K562 (cell line): ENCODE measurements at regions of chr7 and their contacts with region 1.

Region 1: DNA sequence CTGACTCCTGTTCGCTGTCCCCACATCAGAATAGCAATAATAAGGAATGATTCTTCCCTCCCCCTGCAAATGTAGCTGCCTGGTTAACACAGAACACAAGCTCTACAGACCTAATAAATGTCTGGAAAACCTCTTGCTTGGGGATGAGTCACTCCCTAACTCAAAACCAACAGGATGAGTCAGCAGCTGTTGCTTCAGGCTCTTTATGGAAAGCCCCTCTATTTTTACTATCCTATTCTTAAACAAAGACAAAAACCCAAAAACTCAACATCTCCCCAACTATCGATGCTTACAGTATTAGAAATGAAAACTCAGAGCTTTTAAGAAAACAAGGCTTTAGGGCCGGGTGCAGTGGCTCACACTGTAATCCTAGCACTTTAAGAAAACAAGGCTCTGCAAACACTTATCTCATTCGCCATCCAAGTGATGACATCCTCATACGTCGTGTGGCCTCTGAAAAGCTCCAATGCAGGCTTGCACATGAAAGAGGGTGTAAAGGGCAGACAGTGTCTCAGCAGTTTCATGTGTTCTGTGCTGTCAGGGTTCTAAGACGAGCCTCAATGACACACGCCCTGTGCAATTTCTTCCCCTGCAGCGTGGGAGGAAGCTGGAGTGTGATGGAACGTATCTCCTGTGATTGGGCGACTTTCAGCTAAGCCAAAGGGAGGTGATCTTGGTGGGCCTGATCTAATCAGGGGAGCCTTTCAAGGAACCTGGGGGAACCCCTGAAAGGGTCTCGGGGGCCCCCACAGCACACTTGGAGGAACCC is 70.1 kb downstream of the AMZ1 start:
- DNase-seq: peak; percentile 70 to 94 (median 74)
- ATAC-seq: peak; percentile 93
- H3K4me3 ChIP-seq: peak overlapping the region; percentile 17; the same call in 1 of the 2 replicates
- H3K27ac ChIP-seq: peak overlapping the region; percentile 95
- H3K4me1 ChIP-seq: peaks cover 32 to 58% of the 10 kb centered on the region in 2 experiments
- H3K27me3 ChIP-seq: no peaks in the 10 kb centered on the region
- CTCF ChIP-seq: no peak
- EP300 ChIP-seq: peak; percentile 68
- POLR2A ChIP-seq: no peak
- RAD21 ChIP-seq: peak in 1 of 2 experiments; percentile 5; a peak in 2 of 4 replicates

Region 2: DNA sequence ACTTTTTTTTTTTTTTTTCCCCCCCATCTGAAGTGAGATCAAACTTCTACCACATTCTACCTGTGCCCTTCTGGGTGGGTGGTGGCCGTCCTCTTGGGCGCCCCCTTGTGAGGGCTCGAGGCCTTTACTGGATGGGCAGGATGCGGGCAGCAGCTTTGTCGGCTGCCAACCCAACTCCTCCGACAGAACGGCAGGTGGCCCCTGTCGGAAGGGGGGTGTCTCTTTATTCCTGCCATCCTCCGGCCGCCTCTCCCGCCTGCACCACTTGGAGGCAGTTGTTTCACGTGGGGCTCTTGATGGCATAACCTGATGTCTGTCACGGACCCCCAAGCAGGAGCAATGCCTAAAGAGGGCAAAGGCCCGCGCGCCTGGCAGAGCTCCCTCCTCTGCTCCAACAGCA is 39.1 kb before region 1 on chr7:
- CTCF ChIA-PET with region 1: no interaction called
- POLR2A ChIA-PET with region 1: interaction called, 4 read pairs
- in situ Hi-C with region 1: no loop called
- intact Hi-C with region 1: loop called (anchors 5 kb)
- DNase-seq: peak; percentile 30 to 69 (median 56)
- ATAC-seq: no peak
- H3K4me3 ChIP-seq: no peak overlapping the region
- H3K27ac ChIP-seq: no peak overlapping the region
- H3K4me1 ChIP-seq: peaks cover 36 to 59% of the 10 kb centered on the region in 2 experiments
- H3K27me3 ChIP-seq: no peaks in the 10 kb centered on the region
- CTCF ChIP-seq: peak; percentile 46 to 58 (median 50); a peak in 5 of 6 replicates
- EP300 ChIP-seq: no peak
- POLR2A ChIP-seq: no peak
- RAD21 ChIP-seq: peak in 1 of 2 experiments; percentile 15; a peak in 1 of 4 replicates

Region 3: DNA sequence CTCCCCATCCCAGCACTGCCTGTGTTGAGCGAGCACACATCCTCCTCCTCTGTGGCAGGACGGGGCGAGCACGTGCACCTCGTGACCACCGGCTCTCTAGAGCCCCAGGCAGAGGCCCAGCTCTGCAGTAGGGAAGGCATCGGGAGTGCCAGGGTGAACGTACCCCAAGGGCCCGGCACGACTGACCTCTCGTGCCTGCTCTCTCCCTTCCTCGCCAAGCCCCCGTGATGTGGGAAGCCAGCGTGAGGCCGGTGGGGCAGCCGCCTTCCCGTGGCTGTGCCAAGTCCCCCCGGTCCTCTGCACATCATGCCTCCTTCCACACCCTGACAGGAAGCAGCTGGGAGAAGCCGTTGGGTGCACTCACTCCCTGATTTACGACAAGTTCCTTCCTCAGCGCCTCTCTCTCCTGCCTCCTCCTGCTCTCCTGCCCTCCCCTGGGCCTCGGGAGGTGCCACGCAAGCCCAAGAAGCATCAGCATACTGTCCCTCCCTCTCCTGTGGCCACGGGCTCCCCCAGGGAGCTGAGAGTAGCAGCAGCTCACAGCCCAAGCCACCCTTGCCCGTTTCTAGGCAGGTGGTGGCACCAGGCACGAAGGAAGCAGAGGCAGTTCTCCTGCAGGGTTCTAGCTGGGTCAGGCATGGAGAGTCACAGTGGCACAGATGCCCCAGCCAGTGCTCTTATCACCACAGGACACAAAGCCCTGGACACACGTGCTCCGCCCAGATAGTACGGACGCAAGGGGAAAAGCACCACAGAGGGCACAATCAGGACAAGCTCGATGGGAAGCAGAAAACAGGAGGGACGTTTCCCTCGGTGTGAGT is 23.1 kb before region 1 on chr7:
- CTCF ChIA-PET with region 1: no interaction called
- POLR2A ChIA-PET with region 1: interaction called, 22 read pairs
- in situ Hi-C with region 1: no loop called
- intact Hi-C with region 1: loop called (anchors 2 kb)
- DNase-seq: peak; percentile 49 to 78 (median 74)
- ATAC-seq: peak; percentile 30
- H3K4me3 ChIP-seq: no peak overlapping the region
- H3K27ac ChIP-seq: peak overlapping the region; percentile 49; the same call in 2 of the 3 replicates
- H3K4me1 ChIP-seq: peaks cover 42 to 55% of the 10 kb centered on the region in 2 experiments
- H3K27me3 ChIP-seq: no peaks in the 10 kb centered on the region
- CTCF ChIP-seq: no peak
- EP300 ChIP-seq: peak; percentile 52; the same call in 1 of the 2 replicates
- POLR2A ChIP-seq: no peak
- RAD21 ChIP-seq: no peak

Region 4: DNA sequence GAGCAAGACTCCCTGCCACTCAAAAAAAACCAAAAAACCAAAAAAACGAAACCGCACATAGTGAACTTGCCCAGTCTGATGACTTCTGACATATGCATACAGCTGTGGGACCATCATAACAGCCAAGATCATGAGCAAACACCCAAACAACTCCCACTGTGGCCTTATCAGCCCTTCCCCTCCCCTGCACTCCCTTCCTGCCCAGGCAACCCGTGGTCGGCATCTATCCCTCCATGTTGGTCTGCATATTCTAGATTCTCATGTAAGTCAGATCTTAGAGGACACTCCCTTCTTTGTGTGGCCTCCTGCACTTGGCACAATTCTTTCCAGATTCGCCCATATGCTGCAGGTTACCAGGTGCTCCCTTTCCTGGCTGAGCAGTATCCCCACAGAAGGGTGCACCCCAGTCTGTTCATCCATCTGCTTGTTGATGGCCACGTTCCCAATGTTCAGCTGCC is 13.2 kb after region 1 on chr7:
- CTCF ChIA-PET with region 1: no interaction called
- POLR2A ChIA-PET with region 1: interaction called, 10 read pairs
- in situ Hi-C with region 1: no loop called
- intact Hi-C with region 1: no loop called
- DNase-seq: peak; percentile 60 to 87 (median 75)
- ATAC-seq: peak; percentile 99
- H3K4me3 ChIP-seq: no peak overlapping the region
- H3K27ac ChIP-seq: peak overlapping the region; percentile 72; the same call in 2 of the 3 replicates
- H3K4me1 ChIP-seq: peaks cover 11 to 15% of the 10 kb centered on the region in 2 experiments
- H3K27me3 ChIP-seq: no peaks in the 10 kb centered on the region
- CTCF ChIP-seq: no peak
- EP300 ChIP-seq: peak; percentile 83
- POLR2A ChIP-seq: no peak
- RAD21 ChIP-seq: peak in 1 of 2 experiments; percentile 12; a peak in 2 of 4 replicates

Region 5: DNA sequence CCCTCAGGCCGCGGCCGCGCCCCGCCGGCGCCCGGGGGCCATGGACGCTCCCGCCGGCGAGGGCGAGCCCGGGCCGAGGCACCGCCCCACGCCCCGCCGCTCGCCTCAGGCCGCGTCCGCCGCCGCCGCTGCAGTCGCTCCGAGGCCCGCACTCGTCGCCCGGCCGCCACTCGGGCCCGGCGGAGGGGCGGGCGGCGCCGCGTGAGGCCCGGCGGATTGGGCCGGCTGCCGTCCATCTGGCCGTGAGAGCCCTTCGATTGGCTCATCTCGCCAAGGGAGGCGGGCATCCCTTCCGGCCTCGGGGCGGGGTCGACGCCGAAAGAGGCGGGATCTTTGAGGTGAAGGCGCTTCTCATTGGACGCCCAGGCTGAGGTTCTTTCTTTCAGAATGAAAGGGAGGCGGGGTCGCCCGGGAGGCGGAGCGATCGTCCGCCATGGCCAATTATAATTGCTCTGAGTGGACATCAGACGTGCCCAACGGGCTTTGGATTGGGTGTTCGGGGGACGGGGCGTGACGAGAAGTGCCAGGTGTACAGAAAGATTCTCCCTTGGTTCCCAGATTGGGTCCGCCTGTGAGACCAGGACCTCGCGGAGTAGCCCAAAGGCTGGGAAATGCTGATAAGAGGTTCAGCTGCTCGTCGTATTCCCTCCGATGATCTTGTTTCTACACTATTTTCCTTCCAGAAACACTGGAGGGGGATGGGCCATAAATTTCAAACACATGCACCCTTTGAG is 86.2 kb after region 1 on chr7 and contains the start of gene GNA12:
- CTCF ChIA-PET with region 1: no interaction called
- POLR2A ChIA-PET with region 1: interaction called, 5 read pairs
- in situ Hi-C with region 1: no loop called
- intact Hi-C with region 1: loop called (anchors 10 kb)
- DNase-seq: peak; percentile 98 to 99 (median 98)
- ATAC-seq: peak; percentile 99
- H3K4me3 ChIP-seq: peak within 1 kb of the TSS; percentile 50
- H3K27ac ChIP-seq: peak within 1 kb of the TSS; percentile 14; the same call in 2 of the 3 replicates
- H3K4me1 ChIP-seq: peaks cover 9 to 13% of the 10 kb centered on the region in 2 experiments; a peak in 4 of 5 replicates
- H3K27me3 ChIP-seq: no peaks in the 10 kb centered on the region
- CTCF ChIP-seq: no peak
- EP300 ChIP-seq: no peak
- POLR2A ChIP-seq: no peak
- RAD21 ChIP-seq: no peak
- polyA plus RNA-seq, gene GNA12: 0.65 to 2.2 TPM